ENCODE measurements at regions of chr6 and their contacts with region 1.

Region 1: GRCh38 chr6:129598244-129599187 is 111.5 kb downstream of the ARHGAP18 start:
- DNase-seq: no peak
- ATAC-seq: peak; percentile 86

Region 2: DNA sequence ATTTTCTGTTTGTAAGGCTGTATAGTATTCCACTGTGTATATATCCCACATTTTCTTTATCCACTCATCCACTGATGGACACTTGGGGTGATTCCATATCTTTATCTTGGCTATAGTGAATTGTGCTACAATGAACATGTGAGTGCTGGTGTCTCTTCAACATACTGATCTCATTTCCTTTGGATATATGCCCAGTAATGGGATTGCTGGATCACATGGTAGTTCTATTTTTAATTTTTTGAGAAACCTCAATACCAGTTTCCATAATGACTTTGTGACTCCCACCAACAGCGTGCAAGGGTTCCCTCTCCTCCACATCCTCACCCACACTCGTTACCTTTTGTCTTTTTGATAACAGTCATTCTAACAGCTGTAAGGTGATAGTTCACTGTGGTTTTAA is 54.5 kb before region 1 on chr6:
- intact Hi-C with region 1: no loop called
- DNase-seq: no peak
- ATAC-seq: no peak

Region 3: GRCh38 chr6:130020907-130021629 is 422.6 kb after region 1 on chr6:
- intact Hi-C with region 1: loop called (anchors 10 kb)
- DNase-seq: peak; percentile 88
- ATAC-seq: peak; percentile 92

Measured in sciatic nerve (tissue), 2 donors.